ENCODE measurements at regions of chr1 and their contacts with region 1.

Region 1: GRCh38 chr1:9292361-9293240 is at the start of gene SPSB1:
- DNase-seq: peak; percentile 79
- H3K4me3 Mint-ChIP-seq: peak within 1 kb of the TSS; percentile 37
- H3K27ac Mint-ChIP-seq: no peak within 1 kb of the TSS
- H3K4me1 Mint-ChIP-seq: peaks cover 34% of the 10 kb centered on the region
- H3K27me3 Mint-ChIP-seq: peaks cover 3% of the 10 kb centered on the region
- total RNA-seq, gene SPSB1: 11.0 to 12.5 TPM

Region 2: DNA sequence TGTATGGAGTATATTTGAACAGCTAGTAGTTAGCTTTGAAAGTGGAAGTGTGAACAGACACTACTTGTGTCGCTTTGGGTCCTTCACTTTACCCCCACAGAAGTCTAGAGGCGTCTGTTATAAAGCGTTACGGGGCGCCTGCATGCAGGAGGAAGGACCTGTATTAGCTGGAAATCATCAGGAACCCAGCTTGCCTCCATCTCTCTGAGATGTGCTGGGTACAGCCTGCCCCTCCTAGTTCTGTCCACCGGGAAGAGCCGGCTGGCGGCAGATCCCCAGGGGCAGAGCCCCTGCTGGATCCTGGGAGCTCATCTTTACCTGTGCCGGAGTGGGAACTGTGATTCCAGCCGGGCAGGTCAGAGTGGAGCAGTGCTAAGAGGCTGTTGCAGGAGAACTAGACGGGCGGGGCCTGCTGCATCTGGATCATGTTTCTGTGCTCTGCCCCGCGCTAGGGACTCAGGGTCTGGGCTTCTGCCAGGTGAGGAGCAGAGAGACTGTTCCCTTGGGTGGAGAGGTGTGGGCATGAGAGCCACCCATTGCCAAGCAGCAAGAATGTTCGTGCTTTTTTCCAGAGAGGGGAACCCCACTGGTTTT is 22.2 kb before region 1 on chr1:
- CTCF ChIA-PET with region 1: interaction called, 36 read pairs
- POLR2A ChIA-PET with region 1: no interaction called
- intact Hi-C with region 1: loop called (anchors 2 kb)
- DNase-seq: no peak
- H3K4me3 Mint-ChIP-seq: no peak overlapping the region
- H3K27ac Mint-ChIP-seq: no peak overlapping the region
- H3K4me1 Mint-ChIP-seq: peaks cover 9% of the 10 kb centered on the region
- H3K27me3 Mint-ChIP-seq: peaks cover 3% of the 10 kb centered on the region

Region 3: GRCh38 chr1:9317591-9318417 is 25.2 kb after region 1 on chr1:
- CTCF ChIA-PET with region 1: interaction called, 5 read pairs
- POLR2A ChIA-PET with region 1: interaction called, 9 read pairs
- intact Hi-C with region 1: loop called (anchors 1 kb)
- DNase-seq: peak; percentile 44
- H3K4me3 Mint-ChIP-seq: no peak overlapping the region
- H3K27ac Mint-ChIP-seq: no peak overlapping the region
- H3K4me1 Mint-ChIP-seq: peaks cover 38% of the 10 kb centered on the region
- H3K27me3 Mint-ChIP-seq: no peaks in the 10 kb centered on the region

Region 4: DNA sequence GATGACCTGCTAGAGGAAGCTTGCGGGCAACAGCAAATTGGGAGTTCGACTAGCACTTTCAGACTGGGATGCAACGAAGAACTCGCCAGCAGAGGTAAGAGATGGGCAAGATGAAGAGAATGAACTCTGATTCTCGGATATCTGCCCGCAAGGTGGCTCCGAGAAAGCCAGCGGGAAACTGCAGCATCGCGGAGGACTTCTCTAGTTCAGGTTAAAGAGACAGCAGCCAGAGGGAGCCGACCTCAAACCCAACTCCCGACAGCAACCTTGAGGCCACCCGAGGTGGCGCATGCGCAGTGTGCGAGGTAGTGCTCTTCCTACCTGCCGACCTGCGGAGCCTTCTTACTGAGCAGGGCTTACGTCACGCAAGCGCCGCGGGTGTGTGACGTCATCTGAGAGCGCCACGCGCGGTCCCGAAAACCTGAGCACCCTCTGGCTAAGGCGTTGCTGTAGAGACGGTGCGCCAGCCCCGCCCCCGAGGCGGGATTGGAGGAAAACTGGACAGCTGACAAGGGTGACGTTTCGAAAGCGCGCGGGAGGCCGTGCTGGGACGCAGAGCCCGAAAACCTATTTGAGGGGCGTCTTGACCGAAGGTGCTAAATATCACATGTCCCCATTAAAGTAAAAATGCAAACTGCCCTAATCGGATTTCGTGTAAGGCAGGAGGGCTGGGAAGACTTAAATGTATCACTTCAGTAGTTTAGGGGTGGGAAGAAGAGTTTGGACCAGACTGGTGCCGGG is 136.2 kb after region 1 on chr1:
- CTCF ChIA-PET with region 1: interaction called, 6 read pairs
- POLR2A ChIA-PET with region 1: interaction called, 4 read pairs
- intact Hi-C with region 1: loop called (anchors 1 kb)
- DNase-seq: peak; percentile 100
- H3K4me3 Mint-ChIP-seq: peak overlapping the region; percentile 90
- H3K27ac Mint-ChIP-seq: peak overlapping the region; percentile 93
- H3K4me1 Mint-ChIP-seq: peaks cover 44% of the 10 kb centered on the region
- H3K27me3 Mint-ChIP-seq: no peaks in the 10 kb centered on the region

Region 5: DNA sequence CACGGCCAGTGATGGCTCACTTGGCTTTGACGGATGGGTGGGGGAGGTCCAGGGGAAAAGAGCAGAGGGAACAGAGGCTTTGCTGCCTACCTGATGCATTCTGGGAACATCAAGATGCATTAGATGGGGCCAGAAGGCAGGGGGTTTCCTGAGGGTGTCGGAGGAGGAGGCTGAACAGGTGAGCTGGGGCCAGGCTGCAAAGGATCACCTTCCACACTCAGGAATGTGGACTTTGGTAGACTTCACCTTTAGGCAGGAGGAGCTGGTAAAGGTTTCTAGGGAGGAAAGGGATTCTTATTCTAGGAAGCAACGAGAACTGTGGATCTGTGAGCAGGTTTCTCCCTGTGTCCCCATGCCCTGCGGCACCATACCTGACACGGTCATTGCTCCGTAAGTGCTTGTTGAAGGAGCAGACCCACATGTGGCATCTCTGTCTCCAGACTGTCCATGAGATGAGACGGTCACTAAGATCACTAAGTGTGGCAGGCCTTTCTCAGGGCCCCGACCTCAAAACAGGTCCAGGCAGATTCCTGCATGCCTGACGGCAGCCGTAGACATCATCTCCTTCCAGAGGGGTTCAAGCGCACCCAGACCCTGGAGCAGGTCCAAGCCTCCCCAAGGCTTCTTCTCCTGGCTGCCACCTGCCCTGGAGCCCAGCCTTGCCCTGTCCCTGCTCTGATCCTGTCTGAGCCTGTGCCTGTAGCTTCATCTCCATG is 157.5 kb after region 1 on chr1:
- CTCF ChIA-PET with region 1: interaction called, 186 read pairs
- POLR2A ChIA-PET with region 1: no interaction called
- intact Hi-C with region 1: loop called (anchors 1 kb)
- DNase-seq: no peak
- H3K4me3 Mint-ChIP-seq: no peak overlapping the region
- H3K27ac Mint-ChIP-seq: no peak overlapping the region
- H3K4me1 Mint-ChIP-seq: no peaks in the 10 kb centered on the region
- H3K27me3 Mint-ChIP-seq: no peaks in the 10 kb centered on the region

Region 6: DNA sequence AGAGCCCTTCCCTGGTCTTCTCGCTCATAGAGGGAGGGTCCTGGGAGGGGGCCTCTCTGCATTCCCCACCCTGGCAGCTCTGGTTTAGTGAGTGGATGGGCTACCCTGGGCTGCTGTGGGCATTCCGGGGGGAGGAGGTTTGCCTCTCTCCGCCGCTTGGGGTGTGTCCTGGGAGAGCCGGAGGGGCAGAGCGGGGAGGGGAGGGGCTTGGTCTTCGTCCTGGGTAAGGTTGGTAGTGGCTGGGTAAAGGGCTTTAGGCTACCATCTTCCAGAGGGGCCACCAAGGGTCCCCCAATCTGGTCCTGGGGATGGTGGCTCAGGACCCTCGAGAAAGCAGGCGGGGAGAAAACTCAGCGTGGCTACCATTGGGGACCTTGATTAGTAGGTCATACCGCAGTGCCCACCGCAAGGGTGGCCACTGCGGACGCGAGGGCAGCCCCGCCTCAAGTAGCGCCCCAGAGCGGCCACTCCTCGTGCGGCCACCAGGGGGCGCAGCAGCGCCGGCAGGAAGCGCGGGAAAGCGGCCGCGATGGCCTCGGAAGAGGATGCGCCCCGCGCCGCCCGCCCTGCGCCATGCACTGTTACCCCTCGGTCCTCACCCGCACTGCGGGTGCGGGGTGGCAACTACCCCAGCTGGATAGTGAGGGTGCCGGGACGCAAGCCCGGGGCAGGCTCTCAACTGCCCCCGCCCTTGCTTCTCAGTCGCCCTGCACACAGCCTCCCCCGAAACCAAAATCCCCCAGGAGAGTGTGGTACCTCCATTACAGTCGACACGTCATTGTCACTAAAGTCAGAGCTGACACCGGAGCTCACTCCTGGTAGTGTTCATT is 202.5 kb after region 1 on chr1:
- CTCF ChIA-PET with region 1: interaction called, 191 read pairs
- POLR2A ChIA-PET with region 1: interaction called, 3 read pairs
- intact Hi-C with region 1: loop called (anchors 1 kb)
- DNase-seq: peak; percentile 76
- H3K4me3 Mint-ChIP-seq: peak overlapping the region; percentile 65
- H3K27ac Mint-ChIP-seq: no peak overlapping the region
- H3K4me1 Mint-ChIP-seq: peaks cover 3% of the 10 kb centered on the region
- H3K27me3 Mint-ChIP-seq: peaks cover 4% of the 10 kb centered on the region

Measured in activated CD4-positive, alpha-beta memory T cell treated with anti-CD3 and anti-CD28 coated beads for 36 hours (primary cell).